Prostate gland (tissue), 2 donors: ENCODE measurements at regions of chr6 and their contacts with region 1.

Region 1: DNA sequence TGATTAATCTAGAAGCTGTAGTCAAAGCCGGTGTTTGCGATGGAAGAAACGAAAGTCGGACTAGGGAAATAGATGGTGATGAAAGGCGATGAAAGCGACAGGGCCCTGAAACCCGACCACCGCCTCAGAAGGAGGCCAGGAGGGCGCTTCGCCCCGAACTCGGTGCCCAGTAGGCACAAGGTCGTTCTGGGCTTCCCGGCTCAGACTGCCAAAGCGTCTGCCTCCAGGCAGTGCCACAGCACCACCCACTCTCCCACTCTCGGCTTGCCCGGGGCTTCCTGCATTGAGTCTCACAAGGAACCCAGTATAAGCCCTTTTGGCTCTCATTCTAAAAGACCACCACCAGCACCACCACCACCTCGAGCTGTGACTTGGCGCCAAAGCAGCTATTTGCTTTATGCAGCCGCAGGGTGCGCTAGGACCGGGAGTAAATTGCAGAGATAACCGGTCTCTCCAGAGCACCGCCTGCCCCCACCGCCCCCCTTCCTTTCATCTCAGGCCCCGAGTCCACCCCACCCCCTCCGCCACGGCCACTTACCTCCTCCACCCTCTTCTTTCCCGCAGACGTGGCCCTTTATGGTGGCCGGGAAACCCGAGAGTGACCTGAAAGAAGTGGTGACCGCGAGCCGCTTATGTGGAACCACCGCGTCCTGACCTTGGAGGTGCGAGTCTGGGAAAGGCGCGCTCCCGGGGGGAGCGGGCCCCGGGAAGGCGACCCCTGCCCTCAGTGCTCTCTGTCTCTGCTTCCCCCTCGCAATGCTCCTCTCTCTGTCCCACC is 2.4 kb downstream of the TCF21 start:
- DNase-seq: no peak
- H3K4me3 ChIP-seq: peak overlapping the region; percentile 27 to 37
- H3K27ac ChIP-seq: peak overlapping the region; percentile 76 to 83
- H3K4me1 ChIP-seq: no peaks in the 10 kb centered on the region
- H3K27me3 ChIP-seq: peaks cover 22% of the 10 kb centered on the region
- CTCF ChIP-seq: no peak
- POLR2A ChIP-seq: no peak

Region 2: DNA sequence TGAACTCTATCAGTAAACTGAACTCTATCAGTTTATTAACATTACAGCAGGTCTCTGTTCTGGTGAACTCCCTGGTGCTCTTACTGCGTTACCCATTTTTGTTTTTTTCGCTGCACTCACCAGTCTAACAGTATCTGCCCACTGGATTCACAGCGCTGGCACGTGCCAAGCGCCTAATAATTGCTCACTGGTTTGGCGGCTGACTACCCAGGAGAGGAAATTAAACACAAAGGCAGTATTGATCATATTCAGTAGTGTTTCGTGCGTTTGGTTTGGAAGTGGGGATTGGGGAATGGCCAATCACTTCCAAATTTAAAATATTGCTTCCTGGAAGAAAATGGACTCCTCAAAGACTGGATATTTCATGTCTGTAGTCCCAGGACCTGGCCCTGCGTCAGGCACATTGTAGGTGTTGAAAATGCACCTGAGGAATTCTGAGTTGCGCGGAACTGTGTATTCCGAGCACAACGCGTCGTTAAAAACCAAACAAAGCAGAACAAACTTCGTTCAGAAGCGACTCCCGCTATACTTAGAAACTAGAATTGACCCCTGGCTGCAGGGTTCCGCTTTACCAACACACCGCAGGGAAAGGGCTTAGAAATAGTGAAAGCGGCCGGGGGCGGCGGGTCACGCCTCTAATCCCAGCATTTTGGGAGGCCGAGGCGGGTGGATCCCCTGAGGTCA is 1078.0 kb before region 1 on chr6:
- intact Hi-C with region 1: loop called (anchors 10 kb)
- DNase-seq: peak; percentile 25
- H3K4me3 ChIP-seq: peak overlapping the region; percentile 72 to 77
- H3K27ac ChIP-seq: peak overlapping the region; percentile 88 to 89
- H3K4me1 ChIP-seq: peaks cover 13% of the 10 kb centered on the region
- H3K27me3 ChIP-seq: no peaks in the 10 kb centered on the region
- CTCF ChIP-seq: no peak
- POLR2A ChIP-seq: no peak

Region 3: DNA sequence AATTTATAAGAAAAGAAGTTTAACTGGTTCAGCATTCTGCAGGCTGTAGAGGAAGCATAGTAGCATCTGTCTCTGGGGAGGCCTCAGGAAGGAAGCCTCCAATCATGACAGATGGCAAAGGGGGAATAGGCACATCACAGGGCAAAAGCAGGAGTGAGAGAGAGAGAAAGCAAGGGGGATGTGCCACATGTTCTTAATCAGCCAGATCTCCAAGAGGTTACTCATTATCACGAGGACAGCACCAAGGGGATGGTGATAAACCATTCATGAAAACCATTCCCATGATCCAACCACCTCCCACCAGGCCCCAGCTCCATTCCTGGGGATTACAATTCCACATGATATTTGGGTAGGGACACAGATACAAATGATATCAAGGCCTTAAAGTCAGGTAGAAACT is 220.0 kb before region 1 on chr6:
- intact Hi-C with region 1: no loop called
- DNase-seq: no peak
- H3K4me3 ChIP-seq: no peak overlapping the region
- H3K27ac ChIP-seq: no peak overlapping the region
- H3K4me1 ChIP-seq: no peaks in the 10 kb centered on the region
- H3K27me3 ChIP-seq: no peaks in the 10 kb centered on the region
- CTCF ChIP-seq: no peak
- POLR2A ChIP-seq: no peak

Region 4: GRCh38 chr6:133916650-133917151 is 25.4 kb after region 1 on chr6:
- intact Hi-C with region 1: loop called (anchors 2 kb)
- DNase-seq: peak; percentile 80
- H3K4me3 ChIP-seq: no peak overlapping the region
- H3K27ac ChIP-seq: no peak overlapping the region
- H3K4me1 ChIP-seq: no peaks in the 10 kb centered on the region
- H3K27me3 ChIP-seq: no peaks in the 10 kb centered on the region
- CTCF ChIP-seq: peak; percentile 26 to 79 (median 72)
- POLR2A ChIP-seq: no peak